AG04449 (cell line): ENCODE measurements at regions of chr16 and their contacts with region 1.

Region 1: DNA sequence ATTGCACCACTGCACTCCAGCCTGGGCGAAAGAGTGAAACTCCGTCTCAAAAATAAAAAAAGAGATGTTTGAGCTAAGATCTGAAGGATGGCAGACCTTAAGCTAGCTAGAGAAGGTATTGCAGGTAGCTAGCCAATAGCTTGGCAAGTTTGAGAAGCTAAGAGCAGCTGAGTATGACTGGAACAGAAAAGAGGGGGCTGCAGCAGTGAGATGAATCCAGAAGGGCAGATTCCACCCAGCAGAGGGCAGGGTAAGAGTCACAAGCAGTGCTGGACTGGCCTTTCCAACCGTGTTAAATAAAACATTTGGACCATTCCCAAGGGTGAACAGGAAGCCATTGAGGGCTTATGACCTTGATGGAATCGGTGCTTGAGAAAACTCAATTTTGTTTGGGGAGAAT is 5.7 kb upstream of the PHAF1 start:
- DNase-seq: no peak
- H3K4me3 ChIP-seq: no peak overlapping the region
- CTCF ChIP-seq: peak; percentile 38

Region 2: DNA sequence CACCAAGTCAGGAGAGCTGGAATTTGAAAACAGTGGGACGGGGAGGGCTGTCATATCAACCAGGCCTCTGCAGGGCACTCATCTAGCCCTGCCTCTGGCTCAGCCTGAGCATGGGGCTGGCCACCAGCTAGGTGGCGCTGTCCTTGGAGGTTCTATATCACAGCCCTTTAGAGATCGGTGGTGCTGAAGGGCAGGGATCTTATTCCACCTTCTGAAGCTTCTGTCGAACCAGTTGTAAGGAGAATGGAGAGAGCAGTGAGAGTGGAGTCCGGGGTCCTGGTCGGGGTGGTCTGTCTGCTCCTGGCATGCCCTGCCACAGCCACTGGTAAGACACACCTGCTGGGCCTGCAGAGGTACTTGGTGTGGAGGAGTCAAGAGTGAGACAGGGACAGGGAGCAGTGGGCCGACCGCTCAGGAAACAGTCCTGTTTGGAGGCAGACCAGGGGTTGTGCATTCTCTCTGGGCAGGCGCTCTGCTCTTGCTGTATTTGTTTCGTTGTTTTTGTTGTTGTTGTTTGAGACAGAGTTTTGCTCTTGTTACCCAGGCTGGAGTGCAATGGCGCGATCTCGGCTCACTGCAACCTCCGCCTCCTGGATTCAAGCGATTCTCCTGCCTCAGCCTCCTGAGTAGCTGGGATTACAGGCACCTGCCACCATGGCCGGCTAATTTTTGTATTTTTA is 142.9 kb before region 1 on chr16 and contains the start of gene CES3:
- CTCF ChIA-PET with region 1: interaction called, 25 read pairs
- POLR2A ChIA-PET with region 1: no interaction called
- DNase-seq: no peak
- H3K4me3 ChIP-seq: no peak within 1 kb of the TSS
- CTCF ChIP-seq: peak; percentile 84

Region 3: DNA sequence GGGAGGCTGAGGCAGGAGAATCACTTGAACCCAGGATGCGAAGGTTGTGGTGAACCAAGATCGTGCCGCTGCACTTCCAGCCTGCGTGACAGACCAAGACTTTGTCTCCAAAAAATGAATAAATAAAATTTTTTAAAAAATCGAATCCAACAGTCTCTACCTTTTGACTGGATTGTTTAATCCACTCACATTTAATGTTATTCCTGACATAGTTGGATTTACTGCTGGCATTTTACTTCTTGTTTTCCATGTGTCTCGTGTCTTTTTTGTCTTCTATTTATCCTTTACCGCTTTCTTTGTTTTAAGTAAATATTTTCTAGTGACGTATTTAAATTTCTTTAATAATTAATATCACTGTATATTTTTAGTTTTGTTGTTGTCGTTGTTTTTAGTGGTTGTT is 121.0 kb before region 1 on chr16:
- CTCF ChIA-PET with region 1: interaction called, 55 read pairs
- POLR2A ChIA-PET with region 1: no interaction called
- DNase-seq: no peak
- H3K4me3 ChIP-seq: no peak overlapping the region
- CTCF ChIP-seq: no peak

Region 4: DNA sequence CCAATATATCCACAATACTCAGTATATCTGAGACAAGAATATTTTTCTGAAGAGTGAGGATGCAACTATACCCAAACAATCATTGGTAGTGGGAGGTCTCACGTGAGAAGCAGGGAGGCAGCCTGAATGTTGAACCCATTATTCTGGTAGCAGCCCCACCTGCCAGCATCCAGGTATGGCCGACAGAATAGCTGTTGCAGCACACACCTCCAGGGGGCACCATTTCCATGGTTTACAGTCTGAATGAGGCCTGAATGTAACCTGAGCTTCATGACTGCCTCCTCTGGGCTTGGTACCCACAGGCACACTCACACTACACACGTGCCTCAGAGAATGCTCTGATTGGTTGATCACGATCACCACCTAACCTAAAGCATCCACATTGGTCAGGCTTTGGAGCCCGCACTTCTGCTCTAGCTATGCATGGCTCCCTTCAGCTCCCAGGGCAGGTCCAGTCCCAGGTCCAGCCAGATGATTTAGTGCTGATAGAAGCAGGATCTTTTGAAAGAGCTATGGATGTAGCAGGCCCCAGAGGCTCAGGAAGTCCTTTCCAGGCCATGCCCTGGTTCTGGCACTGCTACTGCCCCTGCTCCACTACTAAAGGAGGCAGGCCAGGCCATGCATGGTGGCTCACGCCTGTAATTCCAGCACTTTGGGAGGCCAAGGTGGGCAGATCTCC is 86.1 kb before region 1 on chr16:
- CTCF ChIA-PET with region 1: interaction called, 150 read pairs
- POLR2A ChIA-PET with region 1: interaction called, 3 read pairs
- DNase-seq: peak; percentile 72
- H3K4me3 ChIP-seq: no peak overlapping the region
- CTCF ChIP-seq: peak; percentile 81

Region 5: DNA sequence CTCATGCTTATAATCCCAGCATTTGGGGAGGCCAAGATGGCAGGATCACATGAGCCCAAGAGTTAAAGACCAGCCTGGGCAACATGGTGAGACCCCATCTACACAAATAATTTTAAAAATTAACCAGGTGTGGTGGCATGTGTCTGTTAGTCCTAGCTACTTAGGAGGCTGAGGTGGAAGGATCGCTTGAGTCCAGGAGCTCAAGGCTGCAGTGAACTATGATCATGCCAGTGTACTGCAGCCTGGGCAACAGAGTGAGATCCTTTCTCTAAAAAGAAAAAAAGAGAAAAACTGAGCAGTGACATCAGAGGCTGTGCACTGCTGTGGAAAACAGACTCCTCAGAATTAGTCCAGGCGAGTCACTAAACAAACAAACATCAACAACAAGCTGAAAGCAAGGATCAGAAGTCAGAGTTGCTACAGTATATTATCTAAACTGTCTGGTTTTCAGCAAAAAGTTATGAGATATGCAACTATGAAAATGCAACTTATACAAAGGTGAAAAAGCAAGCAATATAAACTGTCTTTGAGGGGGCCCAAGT is 35.8 kb before region 1 on chr16:
- CTCF ChIA-PET with region 1: interaction called, 14 read pairs
- POLR2A ChIA-PET with region 1: no interaction called
- DNase-seq: no peak
- H3K4me3 ChIP-seq: no peak overlapping the region
- CTCF ChIP-seq: no peak

Region 6: GRCh38 chr16:67115639-67116038 is 11.6 kb after region 1 on chr16:
- CTCF ChIA-PET with region 1: interaction called, 14 read pairs
- POLR2A ChIA-PET with region 1: interaction called, 3 read pairs
- DNase-seq: peak; percentile 74
- H3K4me3 ChIP-seq: no peak overlapping the region
- CTCF ChIP-seq: no peak